H1 (cell line): ENCODE measurements at regions of chr6 and their contacts with region 1.

Region 1: DNA sequence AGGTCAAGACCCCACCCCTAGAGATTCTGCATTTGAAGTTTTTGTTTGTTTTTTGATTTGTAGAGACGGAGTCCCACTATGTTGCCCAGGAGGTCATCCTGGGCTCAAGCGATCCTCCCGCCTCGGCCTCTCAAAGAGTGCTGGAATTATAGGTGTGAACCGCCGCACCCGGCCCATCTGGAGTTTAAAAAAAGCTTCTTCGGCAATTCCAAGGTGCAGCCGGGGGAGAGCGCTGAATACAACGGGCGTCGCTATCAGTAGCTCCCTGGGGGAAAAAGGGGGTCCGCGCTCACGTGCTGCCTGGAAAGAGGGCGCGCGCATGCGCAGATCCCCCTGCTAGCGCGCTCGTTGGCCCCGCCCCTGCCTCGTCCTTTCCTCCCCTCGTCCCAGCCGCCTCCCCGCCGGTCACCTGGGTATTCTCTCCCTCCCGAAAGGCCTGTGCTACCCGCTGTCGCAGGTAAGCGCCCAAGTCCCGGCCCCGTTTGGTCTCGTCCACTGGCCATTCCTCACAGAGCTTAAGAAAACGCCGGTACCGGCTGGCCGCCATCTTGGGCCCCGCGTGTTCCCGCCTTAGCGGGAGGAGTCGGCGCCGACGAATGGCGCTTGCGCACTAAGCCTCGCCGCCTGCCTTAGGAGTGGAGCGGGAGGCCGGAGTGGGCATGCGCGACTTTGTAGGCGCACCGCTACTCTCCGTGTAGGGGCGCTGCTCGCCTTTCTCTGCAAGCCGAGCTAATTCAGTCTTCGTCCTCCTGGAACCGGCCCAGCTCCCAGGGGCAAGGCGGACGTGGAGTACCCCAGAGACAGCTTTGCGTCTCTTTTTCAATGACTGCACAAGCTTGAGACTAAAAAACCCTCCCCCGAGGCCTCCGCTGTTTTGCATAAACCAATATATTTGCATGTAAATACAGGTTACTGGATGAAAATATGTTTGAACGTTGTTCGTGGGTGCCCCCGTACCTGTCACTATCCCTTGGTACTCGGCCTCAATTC is at the start of gene UQCC2:
- DNase-seq: peak; percentile 93 to 96
- H3K4me3 ChIP-seq: peak within 1 kb of the TSS; percentile 59 to 86 (median 77)
- H3K27ac ChIP-seq: peak within 1 kb of the TSS; percentile 98
- H3K4me1 ChIP-seq: peaks cover 2 to 14% (median 6%) of the 10 kb centered on the region in 4 experiments; a peak in 4 of 7 replicates
- H3K27me3 ChIP-seq: no peaks in the 10 kb centered on the region
- CTCF ChIP-seq: peak; percentile 62 to 76 (median 64)
- EP300 ChIP-seq: no peak
- POLR2A ChIP-seq: peak; percentile 78 to 92
- RAD21 ChIP-seq: peak; percentile 80 to 82
- total RNA-seq, gene UQCC2: 104 and 107 TPM in 2 replicates

Region 2: GRCh38 chr6:33049323-33050013 is 662.0 kb before region 1 on chr6:
- CTCF ChIA-PET with region 1: no interaction called
- POLR2A ChIA-PET with region 1: no interaction called
- DNase-seq: no peak
- H3K4me3 ChIP-seq: no peak overlapping the region
- H3K27ac ChIP-seq: no peak overlapping the region
- H3K4me1 ChIP-seq: peaks cover 6 to 10% (median 7%) of the 10 kb centered on the region in 4 experiments; a peak in 4 of 7 replicates
- H3K27me3 ChIP-seq: no peaks in the 10 kb centered on the region
- CTCF ChIP-seq: peak; percentile 46 to 72 (median 56)
- EP300 ChIP-seq: no peak
- POLR2A ChIP-seq: no peak
- RAD21 ChIP-seq: peak; percentile 20 to 23; a peak in 2 of 4 replicates

Region 3: DNA sequence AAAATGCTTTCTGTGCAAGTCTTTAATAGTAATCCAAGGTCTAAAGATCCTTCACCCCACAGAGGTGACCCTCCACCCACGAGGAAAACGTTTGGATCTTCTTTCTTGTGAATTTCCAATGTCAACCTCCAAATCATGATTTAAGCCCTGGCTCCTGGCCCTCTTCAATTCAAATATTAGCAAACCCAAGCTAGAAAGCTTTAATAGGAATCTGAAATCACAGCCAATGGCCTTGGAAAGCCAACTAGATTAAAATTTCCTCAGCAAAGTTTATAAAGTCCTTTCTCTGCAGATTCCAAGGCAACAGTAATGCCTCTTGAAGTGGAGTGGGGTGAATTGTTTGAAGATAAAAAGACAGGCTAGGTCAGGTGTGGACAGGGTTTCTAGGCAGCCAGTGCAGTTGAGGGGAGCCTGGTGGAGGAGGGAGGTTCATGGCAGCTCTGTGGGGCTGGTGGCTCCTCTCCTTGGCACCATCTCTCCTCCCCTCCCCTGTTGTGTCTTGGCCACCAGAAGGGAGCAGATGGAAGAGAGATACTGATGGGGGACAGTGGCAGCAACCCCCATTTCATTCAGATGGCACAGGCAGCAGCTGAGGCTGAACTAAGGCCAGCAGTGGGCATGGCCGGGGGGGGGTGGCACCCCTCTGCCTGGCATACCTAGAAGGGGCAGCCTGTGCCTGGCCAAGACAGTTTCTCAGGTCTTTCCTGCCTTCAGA is 12.1 kb after region 1 on chr6:
- CTCF ChIA-PET with region 1: interaction called, 14 read pairs
- POLR2A ChIA-PET with region 1: interaction called, 15 read pairs
- DNase-seq: no peak
- H3K4me3 ChIP-seq: no peak overlapping the region
- H3K27ac ChIP-seq: no peak overlapping the region
- H3K4me1 ChIP-seq: peaks cover 3 to 8% (median 4%) of the 10 kb centered on the region in 4 experiments; a peak in 6 of 7 replicates
- H3K27me3 ChIP-seq: peaks cover 0 to 6% (median 0%) of the 10 kb centered on the region in 4 experiments; a peak in 3 of 7 replicates
- CTCF ChIP-seq: no peak
- EP300 ChIP-seq: no peak
- POLR2A ChIP-seq: no peak
- RAD21 ChIP-seq: no peak

Region 4: GRCh38 chr6:33761922-33762629 is 50.6 kb after region 1 on chr6:
- CTCF ChIA-PET with region 1: interaction called, 27 read pairs
- POLR2A ChIA-PET with region 1: interaction called, 10 read pairs
- DNase-seq: peak in 1 of 2 experiments; percentile 75
- H3K4me3 ChIP-seq: no peak overlapping the region
- H3K27ac ChIP-seq: no peak overlapping the region
- H3K4me1 ChIP-seq: no peaks in the 10 kb centered on the region
- H3K27me3 ChIP-seq: no peaks in the 10 kb centered on the region
- CTCF ChIP-seq: peak in 2 of 3 experiments; percentile 80 to 81; a peak in 3 of 4 replicates
- EP300 ChIP-seq: no peak
- POLR2A ChIP-seq: no peak
- RAD21 ChIP-seq: peak; percentile 74 to 83